ENCODE measurements at regions of chr17 and their contacts with region 1.

Region 1: DNA sequence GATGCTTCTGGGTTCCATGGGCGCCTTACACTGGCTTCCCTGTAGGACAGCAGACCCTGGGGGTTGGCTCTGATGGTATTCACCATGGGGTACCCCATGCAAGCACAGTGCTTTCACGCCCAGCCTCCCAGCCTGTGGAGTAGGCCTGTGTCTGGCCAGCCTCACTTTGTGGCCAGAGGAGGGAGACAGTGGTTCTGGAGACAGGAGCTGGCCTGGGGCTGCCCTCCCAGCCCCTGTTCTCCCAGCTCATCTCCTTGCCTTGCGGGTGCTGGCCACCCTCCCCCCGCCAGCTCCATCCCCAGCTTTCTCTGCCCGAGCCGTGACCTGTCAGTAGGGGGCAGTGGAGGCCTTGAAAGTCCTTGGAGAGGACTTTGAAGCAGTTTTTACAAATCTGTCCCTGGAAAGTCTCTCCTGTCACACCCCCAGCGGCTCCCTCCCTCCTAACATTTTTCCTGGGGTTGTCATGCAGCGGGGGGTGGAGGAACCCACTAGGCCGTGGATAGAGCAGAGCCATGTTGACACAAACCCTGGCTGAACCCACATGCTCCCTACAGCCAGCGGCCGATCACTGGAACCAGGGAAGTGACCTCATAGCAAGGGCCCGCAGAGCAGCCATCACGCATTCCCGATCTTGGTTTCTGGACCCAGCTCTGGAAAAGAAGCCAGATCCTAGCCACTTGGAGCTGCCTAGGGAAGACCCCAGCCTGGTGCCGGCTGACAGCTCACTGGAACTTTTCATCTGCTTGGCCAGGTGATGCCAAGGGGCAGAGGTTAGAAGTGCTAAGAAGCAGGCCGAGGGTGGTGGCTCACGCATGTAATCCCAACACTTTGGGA is 289.4 kb downstream of the SEC14L1 start:
- DNase-seq: peak; percentile 67 to 87 (median 78)
- ATAC-seq: peak; percentile 64
- H3K4me3 ChIP-seq: no peak overlapping the region
- H3K4me3 Mint-ChIP-seq: peak overlapping the region; percentile 17 to 98 (median 51)
- H3K27ac ChIP-seq: peak overlapping the region; percentile 64
- H3K27ac Mint-ChIP-seq: peak overlapping the region; percentile 80 to 100 (median 95)
- H3K4me1 ChIP-seq: peaks cover 68 to 98% of the 10 kb centered on the region in 2 donors
- H3K4me1 Mint-ChIP-seq: peaks cover 51 to 96% (median 82%) of the 10 kb centered on the region in 7 donors
- H3K27me3 ChIP-seq: no peaks in the 10 kb centered on the region
- H3K27me3 Mint-ChIP-seq: no peaks in the 10 kb centered on the region

Region 2: DNA sequence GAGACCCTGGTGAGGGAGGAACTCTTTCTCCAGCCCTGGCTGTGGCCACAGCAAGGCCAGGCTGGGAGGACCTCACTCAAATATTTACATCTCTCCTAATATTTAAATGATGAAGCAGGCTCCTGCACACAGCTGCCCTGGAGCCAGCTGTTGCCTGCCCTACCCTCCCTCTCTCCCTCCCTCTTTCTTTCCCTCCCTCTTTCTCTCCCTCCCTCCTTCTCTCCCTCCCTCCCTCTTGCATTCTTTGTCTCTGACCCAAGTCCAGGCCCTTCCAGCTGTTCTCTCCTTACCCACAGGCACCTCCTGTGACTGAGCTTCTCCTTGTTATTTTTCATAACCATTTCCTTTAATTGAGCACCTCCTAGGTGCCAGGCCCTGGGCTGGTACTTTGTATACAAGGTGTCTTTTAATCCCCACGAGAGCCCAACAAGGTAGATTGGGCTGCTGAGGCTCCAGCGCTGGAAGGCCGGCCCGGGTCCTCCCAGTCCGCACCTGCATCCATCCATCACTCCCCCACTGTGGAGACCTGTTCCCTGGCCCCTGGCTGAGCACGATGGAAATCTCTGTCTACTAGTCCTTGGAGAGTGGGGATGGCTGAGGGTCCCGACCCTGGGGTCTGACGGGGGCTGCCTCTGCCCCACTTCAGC is 47.0 kb before region 1 on chr17:
- CTCF ChIA-PET with region 1: interaction called, 14 read pairs
- POLR2A ChIA-PET with region 1: interaction called, 3,353 read pairs
- intact Hi-C with region 1: loop called in 1 of 2 experiments (anchors 2 kb)
- DNase-seq: no peak
- ATAC-seq: no peak
- H3K4me3 ChIP-seq: peak overlapping the region; percentile 17
- H3K4me3 Mint-ChIP-seq: peak overlapping the region; percentile 60 to 90 (median 86)
- H3K27ac ChIP-seq: peak overlapping the region; percentile 58
- H3K27ac Mint-ChIP-seq: peak overlapping the region; percentile 76 to 94 (median 93)
- H3K4me1 ChIP-seq: peaks cover 73 to 83% of the 10 kb centered on the region in 2 donors
- H3K4me1 Mint-ChIP-seq: peaks cover 59 to 94% (median 89%) of the 10 kb centered on the region in 7 donors
- H3K27me3 ChIP-seq: no peaks in the 10 kb centered on the region
- H3K27me3 Mint-ChIP-seq: no peaks in the 10 kb centered on the region

Region 3: DNA sequence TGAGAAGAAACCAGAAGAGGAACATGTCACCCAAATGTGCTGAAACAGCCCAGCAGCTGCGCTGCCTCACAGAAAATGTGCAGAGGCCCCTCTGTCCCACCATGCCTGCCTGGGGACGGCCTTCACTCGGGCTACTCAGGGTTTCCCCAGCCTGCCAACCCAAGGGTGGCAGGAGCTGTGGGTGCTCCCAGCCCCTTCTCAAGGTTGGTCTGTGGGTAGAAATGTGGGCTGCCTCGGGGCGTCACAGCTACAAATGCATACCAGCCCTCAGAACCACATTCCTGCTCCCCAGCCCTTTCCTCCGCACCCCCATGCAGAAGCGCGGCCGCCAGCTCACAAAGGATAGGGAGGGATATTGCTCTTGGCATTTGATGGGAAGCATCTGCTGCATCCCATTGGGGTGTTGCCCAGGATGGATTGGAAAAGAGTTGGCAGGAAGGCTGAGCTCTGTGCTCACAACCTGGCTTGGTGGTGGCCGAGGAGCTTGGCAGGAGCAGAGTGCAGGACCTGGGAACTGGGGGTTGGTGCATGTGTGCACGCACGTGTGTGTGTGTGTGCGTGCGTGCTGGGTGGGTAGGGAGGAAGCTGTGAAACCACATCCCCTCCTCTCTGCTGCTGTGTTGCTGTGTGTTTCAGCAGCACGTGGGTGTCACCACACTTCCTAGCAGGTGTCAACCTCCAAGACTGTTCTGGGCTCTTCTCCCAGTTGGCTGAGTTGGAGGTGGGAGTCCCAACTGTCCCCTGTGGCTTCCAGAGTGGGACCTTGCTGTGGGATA is 15.0 kb after region 1 on chr17:
- CTCF ChIA-PET with region 1: interaction called, 21 read pairs
- POLR2A ChIA-PET with region 1: interaction called, 3,353 read pairs
- intact Hi-C with region 1: loop called (anchors 1 to 2 kb)
- DNase-seq: peak; percentile 68 to 96 (median 94)
- ATAC-seq: peak; percentile 84
- H3K4me3 ChIP-seq: peak overlapping the region; percentile 57
- H3K4me3 Mint-ChIP-seq: peak overlapping the region; percentile 77 to 98 (median 86)
- H3K27ac ChIP-seq: peak overlapping the region; percentile 92
- H3K27ac Mint-ChIP-seq: peak overlapping the region; percentile 93 to 100 (median 99)
- H3K4me1 ChIP-seq: peaks cover 90 to 91% of the 10 kb centered on the region in 2 donors
- H3K4me1 Mint-ChIP-seq: peaks cover 73 to 99% (median 93%) of the 10 kb centered on the region in 7 donors
- H3K27me3 ChIP-seq: no peaks in the 10 kb centered on the region
- H3K27me3 Mint-ChIP-seq: no peaks in the 10 kb centered on the region

Region 4: GRCh38 chr17:77456951-77457548 is 26.9 kb after region 1 on chr17:
- CTCF ChIA-PET with region 1: interaction called, 17 read pairs
- POLR2A ChIA-PET with region 1: interaction called, 3,353 read pairs
- intact Hi-C with region 1: loop called in 1 of 2 experiments (anchors 1 kb)
- DNase-seq: peak in 3 of 9 donors; percentile 17 to 44 (median 40)
- ATAC-seq: peak; percentile 35
- H3K4me3 ChIP-seq: peak overlapping the region; percentile 77
- H3K4me3 Mint-ChIP-seq: peak overlapping the region; percentile 92 to 100 (median 98)
- H3K27ac ChIP-seq: peak overlapping the region; percentile 92
- H3K27ac Mint-ChIP-seq: peak overlapping the region; percentile 93 to 100 (median 98)
- H3K4me1 ChIP-seq: peaks cover 46 to 57% of the 10 kb centered on the region in 2 donors
- H3K4me1 Mint-ChIP-seq: peaks cover 34 to 76% (median 48%) of the 10 kb centered on the region in 7 donors
- H3K27me3 ChIP-seq: no peaks in the 10 kb centered on the region
- H3K27me3 Mint-ChIP-seq: no peaks in the 10 kb centered on the region

Region 5: DNA sequence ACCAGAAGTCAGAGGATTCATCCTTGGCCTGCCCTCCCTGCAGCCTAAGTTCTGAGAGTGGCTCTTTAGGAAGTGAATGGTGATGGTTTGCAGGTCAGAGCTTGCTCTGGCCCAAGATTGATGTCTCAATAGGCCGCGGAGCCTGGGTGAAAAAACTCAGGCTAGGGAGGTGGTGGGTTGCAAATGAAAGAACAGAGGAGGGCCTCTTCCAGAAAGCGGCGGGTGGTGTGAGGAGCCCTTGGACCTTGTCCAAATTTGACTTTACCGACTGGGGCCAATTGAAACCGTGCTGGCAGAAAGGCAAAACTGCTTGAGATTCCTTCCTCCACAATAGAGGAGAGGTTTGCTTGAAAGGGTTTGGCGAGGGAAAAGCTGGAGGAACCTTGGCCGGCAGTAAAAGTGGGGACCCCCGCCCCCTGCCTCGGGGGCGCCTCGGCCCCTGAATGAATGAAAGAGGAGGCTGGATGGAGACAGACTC is 41.9 kb after region 1 on chr17:
- CTCF ChIA-PET with region 1: interaction called, 13 read pairs
- POLR2A ChIA-PET with region 1: interaction called, 678 read pairs
- intact Hi-C with region 1: loop called in 1 of 2 experiments (anchors 5 kb)
- DNase-seq: no peak
- ATAC-seq: no peak
- H3K4me3 ChIP-seq: peak overlapping the region; percentile 15
- H3K4me3 Mint-ChIP-seq: peak overlapping the region; percentile 67 to 90 (median 74)
- H3K27ac ChIP-seq: peak overlapping the region; percentile 71
- H3K27ac Mint-ChIP-seq: peak overlapping the region; percentile 87 to 99 (median 94)
- H3K4me1 ChIP-seq: peaks cover 90 to 99% of the 10 kb centered on the region in 2 donors
- H3K4me1 Mint-ChIP-seq: peaks cover 85 to 100% (median 92%) of the 10 kb centered on the region in 7 donors
- H3K27me3 ChIP-seq: no peaks in the 10 kb centered on the region
- H3K27me3 Mint-ChIP-seq: no peaks in the 10 kb centered on the region

Region 6: DNA sequence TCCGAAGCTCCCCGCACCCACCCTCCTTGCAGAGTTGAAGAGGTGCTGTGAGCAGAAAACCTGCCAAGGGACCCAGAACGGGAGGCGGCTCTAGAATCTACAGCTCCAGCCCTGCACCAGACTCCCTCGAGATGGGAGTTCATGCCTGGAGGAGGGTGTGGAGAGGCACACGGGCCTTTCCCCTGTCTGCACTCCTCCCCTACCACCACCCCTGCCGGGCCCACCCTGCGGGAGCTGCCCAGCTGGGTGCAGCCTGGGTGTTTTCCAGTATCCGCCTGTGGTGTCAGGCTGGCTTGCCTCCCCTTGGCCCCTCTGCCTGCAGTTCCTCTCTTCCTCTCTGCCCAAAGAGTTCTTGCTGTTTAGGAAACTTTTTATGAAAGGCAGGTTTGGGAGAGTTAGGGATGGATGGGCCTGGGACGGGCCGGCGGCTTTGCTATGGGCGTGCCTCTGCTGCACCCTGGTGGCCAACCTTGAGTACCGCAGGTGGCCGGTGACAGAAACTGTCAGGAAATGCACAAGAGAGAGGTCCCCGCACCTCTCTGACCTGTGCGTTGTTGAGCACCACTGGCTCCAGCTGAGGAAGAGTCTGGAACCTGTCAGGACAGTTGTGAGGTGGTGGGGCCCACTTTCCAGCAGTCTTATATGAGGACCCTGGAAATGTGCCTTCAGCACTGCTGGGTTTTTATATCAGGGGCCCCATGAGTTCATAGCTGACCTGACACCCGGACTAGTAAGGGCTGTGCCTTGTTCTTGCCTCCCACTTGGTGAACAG is 64.7 kb after region 1 on chr17:
- CTCF ChIA-PET with region 1: interaction called, 45 read pairs
- POLR2A ChIA-PET with region 1: interaction called, 41 read pairs
- intact Hi-C with region 1: loop called (anchors 1 kb)
- DNase-seq: peak; percentile 60 to 82 (median 70)
- ATAC-seq: peak; percentile 90
- H3K4me3 ChIP-seq: no peak overlapping the region
- H3K4me3 Mint-ChIP-seq: peak overlapping the region in 6 of 10 donors; percentile 19 to 54 (median 44)
- H3K27ac ChIP-seq: peak overlapping the region; percentile 27
- H3K27ac Mint-ChIP-seq: peak overlapping the region; percentile 71 to 94 (median 91)
- H3K4me1 ChIP-seq: peaks cover 11 to 21% of the 10 kb centered on the region in 2 donors
- H3K4me1 Mint-ChIP-seq: peaks cover 5 to 37% (median 20%) of the 10 kb centered on the region in 7 donors
- H3K27me3 ChIP-seq: no peaks in the 10 kb centered on the region
- H3K27me3 Mint-ChIP-seq: no peaks in the 10 kb centered on the region